H1 (cell line): ENCODE measurements at regions of chr14 and their contacts with region 1.

Region 1: DNA sequence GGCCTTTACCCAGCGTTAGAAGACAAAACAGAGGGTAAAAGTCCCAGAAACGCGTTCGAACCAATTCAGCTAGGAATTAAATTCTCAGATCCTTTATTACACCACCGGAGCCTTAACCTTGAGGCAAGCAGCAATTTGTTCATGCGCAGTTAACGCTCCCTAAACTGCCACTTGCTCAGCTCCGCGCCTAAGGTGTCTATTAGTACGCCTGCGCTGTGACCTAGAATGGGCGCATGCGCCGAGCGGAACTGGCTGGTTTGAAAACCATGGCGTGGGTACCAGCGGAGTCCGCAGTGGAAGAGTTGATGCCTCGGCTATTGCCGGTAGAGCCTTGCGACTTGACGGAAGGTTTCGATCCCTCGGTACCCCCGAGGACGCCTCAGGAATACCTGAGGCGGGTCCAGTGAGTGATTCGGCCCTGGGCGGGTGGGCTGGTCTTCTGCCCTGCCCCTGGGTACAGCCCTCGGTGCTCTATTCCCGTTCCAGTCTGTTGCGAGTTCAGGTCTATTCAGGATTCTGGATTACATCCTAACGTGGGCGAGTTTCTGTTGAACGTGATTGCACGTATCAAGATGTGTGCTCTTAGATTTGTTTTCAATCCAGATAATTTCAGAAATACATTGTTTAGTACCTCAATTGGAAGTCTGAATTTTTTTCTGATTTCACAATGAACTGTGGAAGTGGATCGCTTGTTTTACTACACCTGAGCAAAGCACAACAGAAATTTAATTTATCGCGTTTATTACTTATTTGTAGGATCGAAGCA is at the start of gene GEMIN2:
- DNase-seq: peak; percentile 79 to 94
- H3K4me3 ChIP-seq: peak within 1 kb of the TSS; percentile 83 to 90 (median 87)
- H3K27ac ChIP-seq: peak within 1 kb of the TSS; percentile 33; the same call in 1 of the 2 replicates
- H3K4me1 ChIP-seq: peaks cover 0 to 2% (median 0%) of the 10 kb centered on the region in 4 experiments; a peak in 1 of 7 replicates
- H3K27me3 ChIP-seq: no peaks in the 10 kb centered on the region
- CTCF ChIP-seq: no peak
- EP300 ChIP-seq: no peak
- POLR2A ChIP-seq: peak; percentile 59 to 85
- RAD21 ChIP-seq: no peak
- total RNA-seq, gene GEMIN2: 29.1 TPM in 2 replicates

Region 2: DNA sequence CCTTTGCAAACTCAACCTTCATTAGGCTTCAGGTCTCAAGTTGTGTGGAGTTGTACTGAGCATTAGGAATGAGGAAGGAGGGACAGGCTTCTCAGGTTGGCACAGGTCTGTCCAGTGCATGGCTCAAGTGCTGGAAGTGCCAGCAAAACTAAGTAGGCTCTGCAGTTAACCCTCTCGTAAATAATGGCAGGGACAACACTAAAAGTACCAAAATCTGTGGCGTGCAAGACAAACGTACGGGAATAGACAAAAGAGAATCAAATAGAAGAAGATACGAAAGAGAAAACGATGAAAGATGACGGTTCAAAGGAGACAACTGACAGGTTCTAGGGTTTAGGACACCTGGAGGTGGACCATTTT is 55.3 kb after region 1 on chr14:
- CTCF ChIA-PET with region 1: interaction called, 5 read pairs
- POLR2A ChIA-PET with region 1: interaction called, 12 read pairs
- DNase-seq: no peak
- H3K4me3 ChIP-seq: peak overlapping the region; percentile 81 to 95 (median 92)
- H3K27ac ChIP-seq: peak overlapping the region; percentile 86
- H3K4me1 ChIP-seq: peaks cover 3 to 6% (median 5%) of the 10 kb centered on the region in 4 experiments; a peak in 6 of 7 replicates
- H3K27me3 ChIP-seq: no peaks in the 10 kb centered on the region
- CTCF ChIP-seq: no peak
- EP300 ChIP-seq: no peak
- POLR2A ChIP-seq: no peak
- RAD21 ChIP-seq: no peak

Region 3: DNA sequence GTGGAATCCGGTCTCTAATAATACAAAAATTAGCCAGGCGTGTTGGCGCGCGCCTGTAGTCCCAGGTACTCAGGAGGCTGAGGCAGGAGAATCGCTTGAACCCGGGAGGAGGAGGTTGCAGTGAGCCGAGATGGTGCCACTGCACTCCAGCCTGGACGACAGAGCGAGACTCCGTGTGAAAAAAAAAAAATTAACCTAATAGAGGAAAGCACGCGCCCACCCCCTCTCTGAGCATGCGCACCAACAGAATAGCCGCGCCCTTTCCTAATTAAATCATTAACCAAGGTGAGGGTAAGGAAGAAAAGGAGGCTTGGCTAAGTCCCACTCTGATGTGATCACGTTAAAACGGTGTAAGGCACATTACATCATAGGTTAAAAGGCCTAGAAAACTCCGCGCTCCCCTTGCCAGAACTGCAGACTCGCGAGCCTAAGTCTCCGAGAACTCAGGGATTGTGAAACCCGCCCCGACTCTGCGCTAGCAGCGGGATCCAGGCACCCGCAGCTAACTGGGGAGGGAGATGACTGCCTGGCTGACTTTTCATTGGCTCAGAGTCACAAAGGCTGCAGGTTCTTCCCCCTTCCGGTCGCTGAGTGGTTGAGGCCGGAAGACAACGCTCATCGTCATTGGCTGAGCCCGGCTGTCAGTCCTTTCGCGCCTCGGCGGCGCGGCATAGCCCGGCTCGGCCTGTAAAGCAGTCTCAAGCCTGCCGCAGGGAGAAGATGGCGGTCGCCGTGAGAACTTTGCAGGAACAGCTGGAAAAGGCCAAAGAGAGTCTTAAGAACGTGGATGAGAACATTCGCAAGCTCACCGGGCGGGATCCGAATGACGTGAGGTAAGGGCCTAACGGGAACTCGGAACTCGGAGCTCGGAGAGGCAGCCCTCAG is 60.5 kb after region 1 on chr14 and contains the start of gene PNN:
- CTCF ChIA-PET with region 1: interaction called, 5 read pairs
- POLR2A ChIA-PET with region 1: interaction called, 12 read pairs
- DNase-seq: peak; percentile 91 to 97
- H3K4me3 ChIP-seq: peak within 1 kb of the TSS; percentile 88 to 97 (median 94)
- H3K27ac ChIP-seq: peak within 1 kb of the TSS; percentile 95
- H3K4me1 ChIP-seq: peaks cover 3 to 6% (median 5%) of the 10 kb centered on the region in 4 experiments; a peak in 6 of 7 replicates
- H3K27me3 ChIP-seq: no peaks in the 10 kb centered on the region
- CTCF ChIP-seq: no peak
- EP300 ChIP-seq: peak in 1 of 2 experiments; percentile 98; a peak in 2 of 3 replicates
- POLR2A ChIP-seq: peak; percentile 96 to 99
- RAD21 ChIP-seq: no peak
- total RNA-seq, gene PNN: 113 and 121 TPM in 2 replicates